CD8-positive, alpha-beta T cell (primary cell): ENCODE measurements at regions of chr11 and their contacts with region 1.

Region 1: DNA sequence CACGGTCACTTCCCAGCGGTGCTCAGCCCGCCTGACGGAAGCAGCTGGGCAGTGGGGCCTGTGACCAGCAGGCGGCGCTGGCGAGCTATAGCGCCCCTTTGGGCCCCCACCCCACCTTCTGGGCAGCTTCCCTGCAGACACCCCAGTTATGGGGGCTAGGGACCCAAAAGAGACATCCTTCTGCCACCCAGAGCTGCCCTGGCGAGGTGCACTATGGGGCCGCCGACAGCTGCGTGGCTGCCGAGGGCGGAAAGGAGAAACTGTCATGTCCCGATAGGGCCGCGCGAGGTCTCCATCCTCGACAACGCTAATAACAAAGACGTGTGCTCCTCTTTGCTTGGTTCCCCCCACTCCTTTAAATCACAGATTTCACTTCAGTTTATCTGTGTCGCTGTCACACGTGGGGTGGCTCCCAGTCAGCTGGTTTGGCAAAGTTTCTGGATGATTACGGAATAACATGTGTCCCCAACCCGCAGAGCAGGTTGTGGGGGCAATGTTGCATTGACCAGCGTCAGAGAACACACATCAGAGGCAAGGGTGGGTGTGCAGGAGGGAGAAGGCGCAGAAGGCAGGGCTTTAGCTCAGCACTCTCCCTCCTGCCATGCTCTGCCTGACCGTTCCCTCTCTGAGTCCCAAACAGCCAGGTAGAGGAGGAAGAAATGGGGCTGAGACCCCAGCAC is 674 bp upstream of the MYO7A start:
- DNase-seq: peak; percentile 35 to 81 (median 60)
- ATAC-seq: peak; percentile 83
- H3K4me3 ChIP-seq: peak overlapping the region; percentile 45 to 54
- H3K4me3 Mint-ChIP-seq: peak overlapping the region; percentile 72
- H3K27ac ChIP-seq: no peak overlapping the region
- H3K27ac Mint-ChIP-seq: no peak overlapping the region
- H3K4me1 ChIP-seq: peaks cover 10% of the 10 kb centered on the region
- H3K4me1 Mint-ChIP-seq: peaks cover 7% of the 10 kb centered on the region
- H3K27me3 ChIP-seq: no peaks in the 10 kb centered on the region
- H3K27me3 Mint-ChIP-seq: no peaks in the 10 kb centered on the region
- CTCF ChIP-seq: peak; percentile 96

Region 2: GRCh38 chr11:77107950-77108349 is 19.4 kb before region 1 on chr11:
- CTCF ChIA-PET with region 1: interaction called, 10 read pairs
- POLR2A ChIA-PET with region 1: no interaction called
- intact Hi-C with region 1: no loop called
- DNase-seq: no peak
- ATAC-seq: no peak
- H3K4me3 ChIP-seq: no peak overlapping the region
- H3K4me3 Mint-ChIP-seq: no peak overlapping the region
- H3K27ac ChIP-seq: no peak overlapping the region
- H3K27ac Mint-ChIP-seq: no peak overlapping the region
- H3K4me1 ChIP-seq: no peaks in the 10 kb centered on the region
- H3K4me1 Mint-ChIP-seq: no peaks in the 10 kb centered on the region
- H3K27me3 ChIP-seq: no peaks in the 10 kb centered on the region
- H3K27me3 Mint-ChIP-seq: no peaks in the 10 kb centered on the region
- CTCF ChIP-seq: no peak

Region 3: GRCh38 chr11:77140231-77140851 is 13.0 kb after region 1 on chr11:
- CTCF ChIA-PET with region 1: interaction called, 11 read pairs
- POLR2A ChIA-PET with region 1: interaction called, 3 read pairs
- intact Hi-C with region 1: no loop called
- DNase-seq: no peak
- ATAC-seq: no peak
- H3K4me3 ChIP-seq: no peak overlapping the region
- H3K4me3 Mint-ChIP-seq: no peak overlapping the region
- H3K27ac ChIP-seq: no peak overlapping the region
- H3K27ac Mint-ChIP-seq: no peak overlapping the region
- H3K4me1 ChIP-seq: peaks cover 13% of the 10 kb centered on the region
- H3K4me1 Mint-ChIP-seq: peaks cover 22% of the 10 kb centered on the region
- H3K27me3 ChIP-seq: no peaks in the 10 kb centered on the region
- H3K27me3 Mint-ChIP-seq: peaks cover 13% of the 10 kb centered on the region
- CTCF ChIP-seq: no peak

Region 4: GRCh38 chr11:77187776-77188632 is 60.6 kb after region 1 on chr11:
- CTCF ChIA-PET with region 1: interaction called, 105 read pairs
- POLR2A ChIA-PET with region 1: no interaction called
- intact Hi-C with region 1: loop called in 1 of 2 experiments (anchors 1 kb)
- DNase-seq: peak; percentile 30 to 81 (median 72)
- ATAC-seq: peak; percentile 71
- H3K4me3 ChIP-seq: no peak overlapping the region
- H3K4me3 Mint-ChIP-seq: no peak overlapping the region
- H3K27ac ChIP-seq: no peak overlapping the region
- H3K27ac Mint-ChIP-seq: no peak overlapping the region
- H3K4me1 ChIP-seq: no peaks in the 10 kb centered on the region
- H3K4me1 Mint-ChIP-seq: no peaks in the 10 kb centered on the region
- H3K27me3 ChIP-seq: no peaks in the 10 kb centered on the region
- H3K27me3 Mint-ChIP-seq: no peaks in the 10 kb centered on the region
- CTCF ChIP-seq: peak; percentile 71

Region 5: DNA sequence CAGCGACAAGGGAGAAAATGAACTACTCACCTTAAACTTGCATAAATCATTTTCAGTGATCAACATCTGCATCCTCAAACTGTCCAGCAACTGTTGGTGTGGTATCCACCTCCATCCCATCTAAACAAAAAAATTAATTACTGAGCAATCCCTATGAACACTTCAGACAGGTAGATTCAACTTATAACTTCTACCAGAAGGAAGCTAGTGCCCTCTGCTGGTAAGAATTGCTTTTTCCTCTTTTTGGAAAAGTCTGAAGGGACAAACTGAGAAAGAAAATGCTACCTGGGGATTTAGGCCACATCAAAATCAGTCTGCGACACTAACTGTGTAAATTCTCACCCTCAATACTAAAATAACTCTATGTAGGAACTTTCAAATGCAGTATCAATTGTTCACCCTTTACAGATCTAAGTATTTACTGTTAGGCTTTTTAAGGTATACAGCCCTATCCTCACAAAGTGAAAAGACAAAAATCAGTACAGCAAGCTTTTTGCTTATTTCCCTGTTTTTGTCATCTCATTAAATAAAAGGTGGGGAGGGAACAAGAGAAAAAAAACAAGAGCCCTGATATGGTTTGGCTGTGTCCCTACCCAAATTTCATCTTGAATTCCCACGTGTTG is 492.3 kb after region 1 on chr11:
- CTCF ChIA-PET with region 1: interaction called, 9 read pairs
- POLR2A ChIA-PET with region 1: no interaction called
- intact Hi-C with region 1: loop called in 1 of 2 experiments (anchors 1 kb)
- DNase-seq: peak in 3 of 9 experiments; percentile 34 to 66 (median 54)
- ATAC-seq: no peak
- H3K4me3 ChIP-seq: no peak overlapping the region
- H3K4me3 Mint-ChIP-seq: no peak overlapping the region
- H3K27ac ChIP-seq: no peak overlapping the region
- H3K27ac Mint-ChIP-seq: no peak overlapping the region
- H3K4me1 ChIP-seq: no peaks in the 10 kb centered on the region
- H3K4me1 Mint-ChIP-seq: no peaks in the 10 kb centered on the region
- H3K27me3 ChIP-seq: no peaks in the 10 kb centered on the region
- H3K27me3 Mint-ChIP-seq: no peaks in the 10 kb centered on the region
- CTCF ChIP-seq: peak; percentile 77